ENCODE measurements at regions of chr9 and their contacts with region 1.

Region 1: DNA sequence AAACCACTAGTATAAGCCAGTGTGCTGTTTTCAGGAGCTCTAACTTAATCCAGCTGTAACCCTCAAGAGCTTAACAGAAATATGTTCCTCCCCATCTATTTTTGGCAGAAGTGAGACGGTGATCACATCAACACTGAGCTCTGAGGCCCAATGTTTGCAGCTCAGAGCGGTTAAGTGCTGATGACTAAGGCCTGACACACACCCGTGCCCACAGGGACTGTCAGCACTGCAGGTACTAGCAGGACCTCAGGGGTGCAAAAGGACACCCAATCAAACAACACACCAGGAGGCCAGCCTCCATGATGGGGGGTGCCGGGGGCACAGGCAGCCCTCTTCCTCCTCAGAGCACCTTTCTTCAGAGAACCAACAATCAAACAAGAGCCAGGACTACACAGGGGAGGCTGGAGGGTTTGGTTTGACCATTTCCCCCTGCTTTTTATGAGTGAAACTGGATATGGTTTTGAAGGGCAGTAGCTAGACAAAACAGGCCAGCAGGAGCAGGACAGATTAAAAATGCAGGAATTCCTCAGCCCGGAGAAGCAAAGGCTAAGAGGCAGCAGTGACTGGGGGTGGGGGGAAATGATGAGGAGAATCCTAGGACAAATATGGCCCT is 61.3 kb downstream of the RAPGEF1 start:
- DNase-seq: peak; percentile 96
- H3K4me3 ChIP-seq: no peak overlapping the region
- H3K27ac ChIP-seq: peak overlapping the region; percentile 35
- H3K4me1 ChIP-seq: peaks cover 44% of the 10 kb centered on the region
- H3K27me3 ChIP-seq: no peaks in the 10 kb centered on the region
- CTCF ChIP-seq: no peak

Region 2: GRCh38 chr9:131608493-131609037 is 70.0 kb before region 1 on chr9:
- CTCF ChIA-PET with region 1: no interaction called
- dilution Hi-C with region 1: no loop called
- in situ Hi-C with region 1: no loop called
- intact Hi-C with region 1: loop called (anchors 2 kb)
- DNase-seq: peak; percentile 81
- H3K4me3 ChIP-seq: peak overlapping the region in 1 of 3 experiments; percentile 11
- H3K27ac ChIP-seq: peak overlapping the region; percentile 59
- H3K4me1 ChIP-seq: peaks cover 36% of the 10 kb centered on the region
- H3K27me3 ChIP-seq: no peaks in the 10 kb centered on the region
- CTCF ChIP-seq: no peak

Region 3: DNA sequence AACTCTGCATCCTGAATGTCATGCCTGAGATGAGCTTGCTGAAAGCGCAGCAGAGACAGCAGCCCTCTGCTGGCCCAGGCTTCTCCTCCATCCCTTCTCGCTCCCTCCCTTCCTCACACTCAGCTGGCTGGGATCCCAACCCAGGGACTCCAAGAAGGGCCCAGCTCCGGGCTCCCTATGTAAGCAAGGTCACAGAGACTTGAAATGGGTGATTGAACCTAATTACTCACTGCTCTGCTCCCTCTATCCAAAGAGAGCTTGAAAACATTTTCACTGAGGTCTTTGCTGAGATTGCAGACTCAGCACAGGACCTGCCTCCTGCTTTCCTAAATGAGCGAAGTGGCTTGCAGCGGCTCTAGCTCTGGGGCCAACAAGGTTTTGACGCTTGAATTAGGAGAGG is 18.5 kb after region 1 on chr9:
- CTCF ChIA-PET with region 1: no interaction called
- dilution Hi-C with region 1: no loop called
- in situ Hi-C with region 1: no loop called
- intact Hi-C with region 1: loop called (anchors 2 kb)
- DNase-seq: no peak
- H3K4me3 ChIP-seq: no peak overlapping the region
- H3K27ac ChIP-seq: no peak overlapping the region
- H3K4me1 ChIP-seq: peaks cover 7% of the 10 kb centered on the region
- H3K27me3 ChIP-seq: no peaks in the 10 kb centered on the region
- CTCF ChIP-seq: no peak

Region 4: GRCh38 chr9:131707733-131708157 is 29.1 kb after region 1 on chr9:
- CTCF ChIA-PET with region 1: no interaction called
- dilution Hi-C with region 1: no loop called
- in situ Hi-C with region 1: no loop called
- intact Hi-C with region 1: loop called (anchors 2 kb)
- DNase-seq: peak; percentile 79
- H3K4me3 ChIP-seq: peak overlapping the region in 2 of 3 experiments; percentile 8 to 20
- H3K27ac ChIP-seq: peak overlapping the region; percentile 89
- H3K4me1 ChIP-seq: peaks cover 63% of the 10 kb centered on the region
- H3K27me3 ChIP-seq: no peaks in the 10 kb centered on the region
- CTCF ChIP-seq: no peak

Region 5: GRCh38 chr9:131714161-131714646 is 35.6 kb after region 1 on chr9:
- CTCF ChIA-PET with region 1: no interaction called
- dilution Hi-C with region 1: no loop called
- in situ Hi-C with region 1: no loop called
- intact Hi-C with region 1: loop called (anchors 2 kb)
- DNase-seq: peak; percentile 93
- H3K4me3 ChIP-seq: peak overlapping the region in 2 of 3 experiments; percentile 4 to 34
- H3K27ac ChIP-seq: peak overlapping the region; percentile 97
- H3K4me1 ChIP-seq: peaks cover 35% of the 10 kb centered on the region
- H3K27me3 ChIP-seq: no peaks in the 10 kb centered on the region
- CTCF ChIP-seq: no peak

Region 6: DNA sequence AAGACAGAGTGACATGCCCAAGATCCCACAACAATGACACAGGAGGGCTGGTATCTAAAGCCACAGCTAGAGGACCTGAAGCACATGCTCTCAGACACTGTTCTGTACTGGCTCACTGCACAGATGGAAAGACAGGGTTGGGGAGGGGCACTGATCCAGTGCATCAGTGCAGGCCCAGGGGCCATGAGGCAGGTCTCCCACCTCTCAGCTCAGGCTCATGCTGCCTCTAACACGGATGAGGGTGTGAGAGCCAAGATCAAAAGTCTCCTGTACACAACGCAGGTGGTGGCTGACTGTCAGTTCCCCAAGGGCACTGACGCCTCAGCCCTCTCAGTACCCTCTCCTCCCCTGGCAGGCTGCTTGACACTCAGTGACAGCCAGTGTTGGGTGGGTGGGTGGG is 50.4 kb after region 1 on chr9:
- CTCF ChIA-PET with region 1: interaction called, 3 read pairs
- dilution Hi-C with region 1: no loop called
- in situ Hi-C with region 1: no loop called
- intact Hi-C with region 1: loop called (anchors 5 kb)
- DNase-seq: no peak
- H3K4me3 ChIP-seq: no peak overlapping the region
- H3K27ac ChIP-seq: peak overlapping the region; percentile 80
- H3K4me1 ChIP-seq: peaks cover 65% of the 10 kb centered on the region
- H3K27me3 ChIP-seq: no peaks in the 10 kb centered on the region
- CTCF ChIP-seq: no peak